K562 (cell line): ENCODE measurements at regions of chr17 and their contacts with region 1.

Region 1: DNA sequence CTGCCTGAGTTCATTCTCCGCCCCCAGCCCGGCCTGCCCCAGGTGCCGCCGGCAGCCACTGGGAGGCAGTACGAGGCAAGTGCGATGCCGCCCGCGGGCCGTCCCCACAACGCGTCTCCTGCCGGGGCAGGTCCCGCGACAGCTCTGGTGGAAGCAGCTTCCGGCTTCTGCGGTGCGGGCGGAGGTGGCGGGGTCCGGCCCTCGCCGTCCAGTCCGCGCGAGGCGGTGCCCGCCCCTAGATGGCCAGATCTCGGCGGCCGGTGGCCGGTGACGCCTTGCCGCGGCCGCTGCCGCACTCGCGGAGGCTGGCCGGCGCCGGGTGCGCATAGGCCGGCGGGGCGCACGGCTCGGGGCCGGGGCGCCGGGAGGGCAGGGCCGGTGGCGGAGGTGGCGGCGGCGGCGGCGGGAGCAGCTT is 1.8 kb downstream of the GJD3 start:
- DNase-seq: peak; percentile 90 to 91 (median 91)
- ATAC-seq: peak; percentile 94
- H3K4me3 ChIP-seq: peak overlapping the region; percentile 58
- H3K27ac ChIP-seq: peak overlapping the region; percentile 68; the same call in 1 of the 3 replicates
- H3K4me1 ChIP-seq: peaks cover 3 to 51% of the 10 kb centered on the region in 2 experiments; a peak in 3 of 5 replicates
- H3K27me3 ChIP-seq: no peaks in the 10 kb centered on the region
- CTCF ChIP-seq: peak; percentile 88 to 94 (median 89)
- EP300 ChIP-seq: no peak
- POLR2A ChIP-seq: peak; percentile 42; the same call in 1 of the 2 replicates
- RAD21 ChIP-seq: peak; percentile 67 to 93

Region 2: GRCh38 chr17:40417609-40418427 is 55.1 kb after region 1 on chr17 and contains the start of gene TOP2A:
- CTCF ChIA-PET with region 1: interaction called, 10 read pairs
- POLR2A ChIA-PET with region 1: interaction called, 3 read pairs
- in situ Hi-C with region 1: no loop called
- intact Hi-C with region 1: loop called (anchors 1 kb)
- DNase-seq: peak; percentile 100
- ATAC-seq: peak; percentile 94
- H3K4me3 ChIP-seq: peak within 1 kb of the TSS; percentile 74
- H3K27ac ChIP-seq: peak within 1 kb of the TSS; percentile 92
- H3K4me1 ChIP-seq: peaks cover 7 to 15% of the 10 kb centered on the region in 2 experiments
- H3K27me3 ChIP-seq: no peaks in the 10 kb centered on the region
- CTCF ChIP-seq: no peak
- EP300 ChIP-seq: 0 out of 2 replicates have a peak, but pooled peaks have one; percentile 23
- POLR2A ChIP-seq: peak; percentile 95
- RAD21 ChIP-seq: no peak
- polyA plus RNA-seq, gene TOP2A: 175 to 259 TPM

Region 3: DNA sequence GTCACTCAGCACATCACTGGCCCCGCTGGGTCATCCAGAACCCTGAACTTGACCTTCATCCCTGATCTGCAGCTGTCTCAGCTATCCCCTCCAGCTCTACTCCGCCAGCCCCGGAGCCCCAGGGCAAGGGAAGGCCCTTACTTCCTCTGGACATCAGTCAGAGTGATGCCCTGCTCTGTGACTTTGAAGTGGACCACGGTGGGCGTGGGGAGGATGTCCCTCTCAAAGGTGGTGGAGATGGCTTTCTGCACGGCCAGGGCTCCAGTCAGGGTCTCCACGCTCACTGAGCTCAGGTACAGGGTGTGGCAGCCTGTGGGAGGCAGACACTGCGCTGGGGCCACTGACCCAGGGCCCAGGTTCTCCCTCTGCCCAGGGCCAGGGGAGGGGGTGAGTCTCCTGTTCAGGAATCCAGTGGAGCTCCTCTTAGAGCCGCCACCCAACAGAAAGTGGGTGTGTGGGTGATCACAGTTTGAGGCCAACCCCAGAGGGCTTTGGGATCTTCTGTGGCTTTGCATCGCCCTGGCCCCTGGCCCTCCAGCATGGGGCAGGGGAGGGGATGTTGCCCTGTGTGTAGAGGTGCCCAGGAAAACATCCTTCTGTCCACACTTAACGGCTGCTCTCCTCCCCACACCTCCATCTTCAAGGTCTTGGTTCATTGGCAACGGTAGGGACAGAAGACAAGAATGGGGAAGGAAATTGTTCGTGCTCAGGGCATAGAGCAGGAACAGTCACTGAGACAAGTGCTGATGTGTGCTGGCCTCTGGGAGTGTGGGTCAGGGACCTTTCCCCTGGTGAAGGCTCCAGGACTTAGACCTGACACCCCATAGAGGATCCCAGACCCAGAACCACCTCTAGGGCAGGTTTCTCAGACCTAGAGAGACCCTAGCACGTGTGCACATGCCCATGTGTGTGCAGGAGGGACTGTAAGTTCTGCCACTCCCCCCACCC is 117.1 kb after region 1 on chr17:
- CTCF ChIA-PET with region 1: interaction called, 6 read pairs
- POLR2A ChIA-PET with region 1: interaction called, 4 read pairs
- in situ Hi-C with region 1: no loop called
- intact Hi-C with region 1: loop called (anchors 10 kb)
- DNase-seq: no peak
- ATAC-seq: no peak
- H3K4me3 ChIP-seq: no peak overlapping the region
- H3K27ac ChIP-seq: no peak overlapping the region
- H3K4me1 ChIP-seq: peaks cover 19 to 41% of the 10 kb centered on the region in 2 experiments; a peak in 4 of 5 replicates
- H3K27me3 ChIP-seq: no peaks in the 10 kb centered on the region
- CTCF ChIP-seq: no peak
- EP300 ChIP-seq: no peak
- POLR2A ChIP-seq: no peak
- RAD21 ChIP-seq: no peak

Region 4: DNA sequence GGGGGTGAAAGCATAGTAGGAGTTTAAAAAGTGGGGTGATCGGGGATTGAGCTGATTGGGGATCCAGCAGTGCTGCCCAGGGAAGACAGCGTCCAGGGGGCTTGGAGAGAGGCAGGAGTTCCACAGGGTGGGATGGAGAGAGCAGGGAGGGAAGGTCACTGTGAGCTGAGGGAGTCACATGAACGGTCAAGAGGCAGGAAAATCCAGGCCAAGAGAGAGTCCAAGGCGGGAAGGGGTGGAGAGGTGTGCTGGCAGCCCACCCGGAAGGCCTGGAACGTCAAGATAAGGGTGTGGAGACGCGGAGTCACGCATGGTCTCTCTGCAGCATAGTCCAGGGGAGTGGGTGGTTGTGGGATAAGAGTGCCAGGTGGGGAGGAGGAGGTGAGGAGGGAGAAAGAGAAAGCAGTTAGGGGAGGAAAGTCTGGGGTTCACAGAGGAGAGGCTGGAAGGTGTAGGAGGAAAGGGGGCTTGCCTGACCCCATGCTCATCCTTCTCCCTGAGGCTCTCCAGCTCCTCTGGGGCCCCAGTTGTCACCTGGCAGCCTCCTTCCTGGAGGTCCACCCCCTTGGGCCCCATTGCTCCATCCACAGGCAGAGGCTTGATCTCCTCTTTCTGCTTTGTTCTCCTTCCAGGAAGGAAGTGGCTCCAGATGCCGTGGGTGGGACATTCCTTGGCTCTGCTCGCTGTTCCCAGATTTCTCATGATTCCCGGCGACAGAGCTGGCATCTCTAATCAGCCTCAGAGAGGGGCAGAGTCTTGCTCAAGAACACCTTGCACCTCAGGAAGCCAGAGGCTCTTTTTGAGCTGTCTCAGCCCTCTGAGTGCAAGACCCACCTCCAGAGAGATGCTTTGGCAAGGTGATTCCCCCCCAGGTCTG is 173.8 kb after region 1 on chr17:
- CTCF ChIA-PET with region 1: interaction called, 28 read pairs
- POLR2A ChIA-PET with region 1: interaction called, 7 read pairs
- in situ Hi-C with region 1: loop called (anchors 5 kb)
- intact Hi-C with region 1: loop called (anchors 1 kb)
- DNase-seq: peak; percentile 86 to 94 (median 88)
- ATAC-seq: peak; percentile 80
- H3K4me3 ChIP-seq: no peak overlapping the region
- H3K27ac ChIP-seq: peak overlapping the region; percentile 78
- H3K4me1 ChIP-seq: peaks cover 30 to 55% of the 10 kb centered on the region in 2 experiments
- H3K27me3 ChIP-seq: no peaks in the 10 kb centered on the region
- CTCF ChIP-seq: no peak
- EP300 ChIP-seq: peak; percentile 87
- POLR2A ChIP-seq: no peak
- RAD21 ChIP-seq: no peak